ENCODE measurements at regions of chr3 and their contacts with region 1.

Region 1: GRCh38 chr3:182389071-182389815 is 404.1 kb upstream of the ATP11B start:
- DNase-seq: peak; percentile 83
- H3K4me3 Mint-ChIP-seq: no peak overlapping the region
- H3K27ac Mint-ChIP-seq: peak overlapping the region; percentile 72
- H3K4me1 Mint-ChIP-seq: peaks cover 13% of the 10 kb centered on the region
- H3K27me3 Mint-ChIP-seq: no peaks in the 10 kb centered on the region
- CTCF ChIP-seq: no peak

Region 2: GRCh38 chr3:182284793-182285192 is 104.5 kb before region 1 on chr3:
- CTCF ChIA-PET with region 1: no interaction called
- intact Hi-C with region 1: loop called (anchors 5 kb)
- DNase-seq: peak; percentile 75
- H3K4me3 Mint-ChIP-seq: peak overlapping the region; percentile 33
- H3K27ac Mint-ChIP-seq: peak overlapping the region; percentile 89
- H3K4me1 Mint-ChIP-seq: peaks cover 34% of the 10 kb centered on the region
- H3K27me3 Mint-ChIP-seq: no peaks in the 10 kb centered on the region
- CTCF ChIP-seq: no peak

Region 3: GRCh38 chr3:182325213-182325941 is 63.9 kb before region 1 on chr3:
- CTCF ChIA-PET with region 1: interaction called, 3 read pairs
- intact Hi-C with region 1: loop called (anchors 2 kb)
- DNase-seq: no peak
- H3K4me3 Mint-ChIP-seq: no peak overlapping the region
- H3K27ac Mint-ChIP-seq: peak overlapping the region; percentile 57
- H3K4me1 Mint-ChIP-seq: peaks cover 45% of the 10 kb centered on the region
- H3K27me3 Mint-ChIP-seq: no peaks in the 10 kb centered on the region
- CTCF ChIP-seq: no peak

Region 4: DNA sequence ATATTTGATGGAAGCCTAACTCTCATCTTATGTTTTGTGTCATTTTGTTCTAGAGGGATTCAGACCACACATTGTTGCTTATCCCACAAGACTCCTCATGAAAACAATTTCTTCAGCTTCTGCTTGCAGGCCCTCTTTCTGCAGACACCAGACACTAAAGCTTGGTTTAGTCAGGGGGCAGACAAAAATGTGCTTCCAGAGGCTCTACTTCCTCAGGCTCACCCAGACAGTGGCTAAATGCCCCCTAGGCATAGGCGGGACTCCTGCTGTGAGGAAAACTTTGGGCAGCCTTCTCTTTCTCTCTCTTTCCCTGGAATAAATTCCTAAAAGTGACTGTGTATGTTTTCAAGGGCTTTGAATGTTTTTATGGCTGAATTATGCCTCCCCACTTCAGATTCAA is 31.3 kb before region 1 on chr3:
- CTCF ChIA-PET with region 1: no interaction called
- intact Hi-C with region 1: loop called (anchors 1 kb)
- DNase-seq: no peak
- H3K4me3 Mint-ChIP-seq: no peak overlapping the region
- H3K27ac Mint-ChIP-seq: no peak overlapping the region
- H3K4me1 Mint-ChIP-seq: peaks cover 8% of the 10 kb centered on the region
- H3K27me3 Mint-ChIP-seq: no peaks in the 10 kb centered on the region
- CTCF ChIP-seq: no peak

Region 5: GRCh38 chr3:182490596-182491491 is 101.6 kb after region 1 on chr3:
- CTCF ChIA-PET with region 1: no interaction called
- intact Hi-C with region 1: loop called (anchors 2 kb)
- DNase-seq: peak; percentile 54
- H3K4me3 Mint-ChIP-seq: no peak overlapping the region
- H3K27ac Mint-ChIP-seq: no peak overlapping the region
- H3K4me1 Mint-ChIP-seq: peaks cover 24% of the 10 kb centered on the region
- H3K27me3 Mint-ChIP-seq: no peaks in the 10 kb centered on the region
- CTCF ChIP-seq: peak; percentile 70